H1 (cell line): ENCODE measurements at regions of chr12 and their contacts with region 1.

Region 1: GRCh38 chr12:109696485-109697279 is 16.9 kb upstream of the FAM222A start:
- DNase-seq: no peak
- H3K4me3 ChIP-seq: no peak overlapping the region
- H3K27ac ChIP-seq: no peak overlapping the region
- H3K4me1 ChIP-seq: peaks cover 0 to 5% (median 3%) of the 10 kb centered on the region in 4 experiments; a peak in 3 of 7 replicates
- H3K27me3 ChIP-seq: no peaks in the 10 kb centered on the region
- CTCF ChIP-seq: no peak
- EP300 ChIP-seq: no peak
- POLR2A ChIP-seq: no peak
- RAD21 ChIP-seq: no peak

Region 2: GRCh38 chr12:109719236-109720022 is 22.7 kb after region 1 on chr12:
- CTCF ChIA-PET with region 1: interaction called, 12 read pairs
- POLR2A ChIA-PET with region 1: interaction called, 5 read pairs
- DNase-seq: no peak
- H3K4me3 ChIP-seq: no peak overlapping the region
- H3K27ac ChIP-seq: 0 out of 2 replicates have a peak overlapping the region, but pooled peaks have one; percentile 14
- H3K4me1 ChIP-seq: peaks cover 0 to 33% (median 15%) of the 10 kb centered on the region in 4 experiments; a peak in 6 of 7 replicates
- H3K27me3 ChIP-seq: peaks cover 4 to 40% (median 39%) of the 10 kb centered on the region in 4 experiments
- CTCF ChIP-seq: peak in 2 of 3 experiments; percentile 51 to 62; a peak in 3 of 4 replicates
- EP300 ChIP-seq: no peak
- POLR2A ChIP-seq: no peak
- RAD21 ChIP-seq: peak; percentile 30 to 57; a peak in 2 of 4 replicates